ENCODE measurements at regions of chrX and their contacts with region 1.

Region 1: GRCh38 chrX:118974908-118975671 is 672 bp downstream of the LONRF3 start:
- DNase-seq: peak in 2 of 3 donors; percentile 19 to 37
- H3K4me3 ChIP-seq: peak overlapping the region; percentile 49 to 78 (median 75)
- H3K4me3 Mint-ChIP-seq: peak overlapping the region; percentile 95 to 98
- H3K27ac ChIP-seq: peak overlapping the region; percentile 69 to 74
- H3K27ac Mint-ChIP-seq: peak overlapping the region; percentile 84 to 95 (median 91)
- H3K4me1 ChIP-seq: peaks cover 39 to 41% of the 10 kb centered on the region in 2 donors
- H3K4me1 Mint-ChIP-seq: peaks cover 38% of the 10 kb centered on the region
- H3K27me3 ChIP-seq: peaks cover 17 to 35% of the 10 kb centered on the region in 2 donors
- H3K27me3 Mint-ChIP-seq: peaks cover 25 to 40% (median 35%) of the 10 kb centered on the region in 3 donors
- CTCF ChIP-seq: no peak

Region 2: GRCh38 chrX:119015407-119016237 is 40.5 kb after region 1 on chrX:
- intact Hi-C with region 1: loop called in 1 of 2 experiments (anchors 5 kb)
- DNase-seq: peak; percentile 92 to 97 (median 96)
- H3K4me3 ChIP-seq: no peak overlapping the region
- H3K4me3 Mint-ChIP-seq: no peak overlapping the region
- H3K27ac ChIP-seq: peak overlapping the region; percentile 66 to 86
- H3K27ac Mint-ChIP-seq: peak overlapping the region; percentile 92 to 97 (median 96)
- H3K4me1 ChIP-seq: peaks cover 31 to 33% of the 10 kb centered on the region in 2 donors
- H3K4me1 Mint-ChIP-seq: peaks cover 31% of the 10 kb centered on the region
- H3K27me3 ChIP-seq: no peaks in the 10 kb centered on the region
- H3K27me3 Mint-ChIP-seq: peaks cover 0 to 5% (median 0%) of the 10 kb centered on the region in 3 donors
- CTCF ChIP-seq: no peak

Region 3: GRCh38 chrX:119093991-119094737 is 119.1 kb after region 1 on chrX:
- intact Hi-C with region 1: no loop called
- DNase-seq: no peak
- H3K4me3 ChIP-seq: no peak overlapping the region
- H3K4me3 Mint-ChIP-seq: no peak overlapping the region
- H3K27ac ChIP-seq: no peak overlapping the region
- H3K27ac Mint-ChIP-seq: peak overlapping the region in 1 of 7 donors; percentile 75
- H3K4me1 ChIP-seq: peaks cover 4 to 6% of the 10 kb centered on the region in 2 donors
- H3K4me1 Mint-ChIP-seq: peaks cover 12% of the 10 kb centered on the region
- H3K27me3 ChIP-seq: no peaks in the 10 kb centered on the region
- H3K27me3 Mint-ChIP-seq: peaks cover 3 to 8% (median 4%) of the 10 kb centered on the region in 3 donors
- CTCF ChIP-seq: no peak